ENCODE measurements at regions of chr3 and their contacts with region 1.

Region 1: DNA sequence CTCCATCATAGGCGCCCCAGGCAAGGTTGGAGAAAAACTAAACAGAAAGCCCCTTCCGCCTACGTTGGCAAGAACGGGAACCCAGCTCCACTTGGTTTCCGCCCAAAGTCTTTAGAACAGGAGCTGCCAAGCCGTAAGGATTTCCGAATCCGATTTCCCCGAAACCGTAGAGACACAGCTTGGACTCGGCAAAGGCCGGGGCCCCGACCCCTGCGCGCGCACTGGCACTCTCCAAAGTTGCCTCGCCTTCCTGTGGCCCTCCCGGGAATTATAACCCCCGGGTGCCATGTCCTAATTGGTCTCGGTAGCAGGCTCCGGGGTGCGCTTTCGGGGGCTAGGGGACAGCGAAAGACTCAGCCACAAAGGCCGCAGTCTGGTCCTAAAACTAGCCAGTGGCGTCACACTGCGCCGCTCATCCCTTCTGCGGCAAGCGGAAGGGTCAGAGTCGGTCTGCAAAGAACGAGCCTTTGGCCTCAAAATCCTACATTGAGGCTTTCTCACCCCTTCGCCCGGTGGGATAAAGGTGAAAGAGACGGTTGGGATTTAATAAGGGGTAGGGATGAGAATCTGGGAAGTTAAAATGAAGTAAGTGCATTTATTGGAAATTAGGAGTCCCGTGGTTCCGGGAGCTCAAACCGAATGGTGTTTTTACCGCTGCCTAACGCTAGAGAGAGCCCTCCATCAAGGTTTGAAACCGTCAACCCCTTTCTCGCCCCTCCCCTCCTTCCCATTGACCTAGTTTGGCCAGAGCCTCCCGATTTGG is 6.8 kb downstream of the BCL6 start:
- DNase-seq: peak; percentile 80
- H3K4me3 ChIP-seq: peak overlapping the region; percentile 55
- H3K27ac ChIP-seq: peak overlapping the region; percentile 91
- H3K27me3 ChIP-seq: no peaks in the 10 kb centered on the region
- CTCF ChIP-seq: peak; percentile 85

Region 2: DNA sequence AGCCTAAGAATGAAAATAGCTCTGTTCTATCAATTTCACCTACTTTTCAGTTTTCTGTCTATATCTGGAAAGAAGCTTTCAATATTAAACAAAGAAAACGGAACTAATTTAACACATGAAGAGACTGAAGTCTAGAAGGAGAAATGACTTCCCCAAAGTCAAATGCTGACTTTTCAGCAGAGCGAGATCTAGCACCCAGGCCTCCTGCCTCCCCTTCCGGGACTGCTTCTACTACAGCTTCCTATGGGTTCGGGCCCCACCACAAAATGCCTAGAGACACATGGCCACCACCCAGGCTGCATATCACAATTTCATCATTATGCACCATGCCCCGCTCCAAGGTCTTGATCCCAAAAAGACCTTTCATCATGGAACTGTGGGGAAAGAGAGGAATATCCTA is 172.8 kb before region 1 on chr3:
- CTCF ChIA-PET with region 1: no interaction called
- POLR2A ChIA-PET with region 1: no interaction called
- DNase-seq: no peak
- H3K4me3 ChIP-seq: no peak overlapping the region
- H3K27ac ChIP-seq: no peak overlapping the region
- H3K27me3 ChIP-seq: peaks cover 2% of the 10 kb centered on the region
- CTCF ChIP-seq: no peak

Region 3: GRCh38 chr3:187979564-187979963 is 241.1 kb after region 1 on chr3:
- CTCF ChIA-PET with region 1: no interaction called
- POLR2A ChIA-PET with region 1: no interaction called
- DNase-seq: no peak
- H3K4me3 ChIP-seq: no peak overlapping the region
- H3K27ac ChIP-seq: no peak overlapping the region
- H3K27me3 ChIP-seq: no peaks in the 10 kb centered on the region
- CTCF ChIP-seq: no peak

Region 4: DNA sequence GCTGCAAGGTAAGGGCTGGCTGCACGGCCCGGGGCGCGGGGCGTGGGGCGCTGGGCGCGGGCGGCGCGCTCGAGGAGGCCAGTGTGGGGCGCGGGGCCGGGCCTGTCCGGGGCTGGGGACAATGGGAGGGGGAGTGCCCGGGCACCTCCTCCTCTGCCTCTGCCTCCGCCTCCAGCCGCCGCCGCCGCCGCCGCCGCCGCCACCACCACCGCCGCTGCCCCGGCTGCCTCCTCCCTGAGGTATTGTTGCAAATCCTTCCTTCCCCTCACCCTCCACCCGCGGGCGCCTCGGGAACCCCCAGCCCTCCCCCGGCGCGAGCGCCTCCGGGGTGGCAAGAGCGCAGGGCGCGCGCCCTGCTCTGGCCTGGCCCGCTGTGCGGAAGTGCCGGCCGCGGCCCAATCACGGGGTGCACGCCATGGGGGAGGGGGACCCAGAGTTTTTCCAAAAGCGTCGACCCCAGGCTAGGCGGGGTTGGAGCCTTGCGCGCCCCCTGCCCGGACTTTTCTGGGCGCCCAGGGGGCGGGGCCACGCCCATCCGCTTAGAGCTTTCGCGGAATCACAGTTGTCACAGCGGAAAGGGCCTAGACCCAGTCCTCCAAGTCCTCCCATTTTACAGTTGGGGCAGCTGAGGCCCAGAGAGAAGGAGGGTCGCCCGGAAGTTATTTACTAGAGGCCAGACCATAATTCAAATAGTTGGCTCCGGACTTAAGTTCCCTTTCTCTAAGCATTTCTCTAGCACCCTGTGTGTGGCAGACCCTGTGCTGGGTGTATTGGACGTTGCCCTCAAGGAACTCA is 415.7 kb after region 1 on chr3 and contains the start of gene LPP:
- CTCF ChIA-PET with region 1: interaction called, 30 read pairs
- POLR2A ChIA-PET with region 1: interaction called, 5 read pairs
- DNase-seq: peak; percentile 39
- H3K4me3 ChIP-seq: peak within 1 kb of the TSS; percentile 64
- H3K27ac ChIP-seq: peak within 1 kb of the TSS; percentile 99
- H3K27me3 ChIP-seq: no peaks in the 10 kb centered on the region
- CTCF ChIP-seq: 0 out of 2 replicates have a peak, but pooled peaks have one; percentile 1
- polyA plus RNA-seq, gene LPP: 64.2 and 76.3 TPM in 2 replicates

Region 5: GRCh38 chr3:188262913-188263683 is 524.6 kb after region 1 on chr3:
- CTCF ChIA-PET with region 1: interaction called, 51 read pairs
- POLR2A ChIA-PET with region 1: interaction called, 3 read pairs
- DNase-seq: no peak
- H3K4me3 ChIP-seq: no peak overlapping the region
- H3K27ac ChIP-seq: peak overlapping the region; percentile 39
- H3K27me3 ChIP-seq: no peaks in the 10 kb centered on the region
- CTCF ChIP-seq: no peak

Region 6: GRCh38 chr3:188323067-188323842 is 584.7 kb after region 1 on chr3:
- CTCF ChIA-PET with region 1: interaction called, 16 read pairs
- POLR2A ChIA-PET with region 1: no interaction called
- DNase-seq: no peak
- H3K4me3 ChIP-seq: no peak overlapping the region
- H3K27ac ChIP-seq: no peak overlapping the region
- H3K27me3 ChIP-seq: no peaks in the 10 kb centered on the region
- CTCF ChIP-seq: no peak

Region 7: GRCh38 chr3:188546835-188547670 is 808.5 kb after region 1 on chr3:
- CTCF ChIA-PET with region 1: interaction called, 15 read pairs
- POLR2A ChIA-PET with region 1: interaction called, 4 read pairs
- DNase-seq: peak; percentile 55
- H3K4me3 ChIP-seq: no peak overlapping the region
- H3K27ac ChIP-seq: no peak overlapping the region
- H3K27me3 ChIP-seq: no peaks in the 10 kb centered on the region
- CTCF ChIP-seq: no peak

Region 8: GRCh38 chr3:188914552-188914951 is 1176.0 kb after region 1 on chr3:
- CTCF ChIA-PET with region 1: interaction called, 10 read pairs
- POLR2A ChIA-PET with region 1: no interaction called
- DNase-seq: no peak
- H3K4me3 ChIP-seq: no peak overlapping the region
- H3K27ac ChIP-seq: no peak overlapping the region
- H3K27me3 ChIP-seq: no peaks in the 10 kb centered on the region
- CTCF ChIP-seq: no peak

Region 9: GRCh38 chr3:189148081-189148507 is 1409.6 kb after region 1 on chr3:
- CTCF ChIA-PET with region 1: interaction called, 18 read pairs
- POLR2A ChIA-PET with region 1: no interaction called
- DNase-seq: peak; percentile 27
- H3K4me3 ChIP-seq: no peak overlapping the region
- H3K27ac ChIP-seq: no peak overlapping the region
- H3K27me3 ChIP-seq: peaks cover 14% of the 10 kb centered on the region
- CTCF ChIP-seq: peak; percentile 77